ENCODE measurements at regions of chr3 and their contacts with region 1.

Region 1: GRCh38 chr3:179929091-179929529 is 107.6 kb downstream of the PEX5L start:
- DNase-seq: peak; percentile 54
- H3K4me3 Mint-ChIP-seq: no peak overlapping the region
- H3K27ac Mint-ChIP-seq: no peak overlapping the region
- H3K4me1 Mint-ChIP-seq: peaks cover 1% of the 10 kb centered on the region
- H3K27me3 Mint-ChIP-seq: peaks cover 7% of the 10 kb centered on the region

Region 2: DNA sequence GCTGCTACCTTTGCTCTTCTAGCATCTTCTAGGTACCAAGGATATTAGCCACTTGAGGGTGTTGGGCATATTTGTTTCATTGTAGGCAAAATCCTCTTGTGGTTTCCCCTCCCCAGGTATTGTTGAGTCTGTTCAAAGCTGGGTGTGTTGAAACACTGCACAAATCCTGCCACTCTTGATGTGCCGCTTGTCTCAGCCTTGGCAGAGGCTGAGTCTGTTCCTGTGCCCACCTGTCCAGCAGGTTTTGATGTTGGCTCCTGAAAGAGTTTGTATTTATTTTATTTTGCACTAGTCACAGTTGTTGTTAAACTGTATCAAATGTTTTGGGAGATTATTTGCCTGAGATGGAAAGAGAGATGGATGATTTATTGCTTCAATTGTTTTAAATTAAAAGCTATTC is 140.1 kb before region 1 on chr3:
- CTCF ChIA-PET with region 1: no interaction called
- POLR2A ChIA-PET with region 1: no interaction called
- intact Hi-C with region 1: no loop called
- DNase-seq: no peak
- H3K4me3 Mint-ChIP-seq: no peak overlapping the region
- H3K27ac Mint-ChIP-seq: no peak overlapping the region
- H3K4me1 Mint-ChIP-seq: no peaks in the 10 kb centered on the region
- H3K27me3 Mint-ChIP-seq: no peaks in the 10 kb centered on the region

Region 3: DNA sequence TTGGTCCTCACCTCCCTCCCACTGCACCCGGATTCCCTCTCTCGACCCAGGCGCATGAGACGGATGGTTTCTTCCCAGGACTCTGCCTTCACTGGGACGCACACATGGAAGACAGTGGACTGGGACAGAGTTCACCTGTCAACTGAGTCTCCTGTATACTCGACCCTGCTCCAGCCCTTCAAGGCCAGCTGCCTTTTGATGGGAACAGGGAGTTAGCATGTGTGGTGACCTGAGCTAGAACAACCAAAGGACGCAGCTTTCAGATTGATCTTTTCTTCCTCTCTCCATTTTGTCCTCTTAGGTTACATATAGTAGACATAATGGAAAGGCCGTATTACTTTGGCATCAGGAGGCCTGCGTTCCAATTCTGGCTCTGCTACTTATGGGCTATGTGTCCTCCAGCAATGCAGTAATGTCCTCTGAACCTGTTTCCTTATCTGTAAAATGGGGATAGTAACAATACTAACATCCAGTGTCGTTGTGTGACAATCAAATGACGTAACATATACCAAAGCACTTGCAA is 13.5 kb after region 1 on chr3:
- CTCF ChIA-PET with region 1: interaction called, 11 read pairs
- POLR2A ChIA-PET with region 1: no interaction called
- intact Hi-C with region 1: no loop called
- DNase-seq: no peak
- H3K4me3 Mint-ChIP-seq: no peak overlapping the region
- H3K27ac Mint-ChIP-seq: no peak overlapping the region
- H3K4me1 Mint-ChIP-seq: no peaks in the 10 kb centered on the region
- H3K27me3 Mint-ChIP-seq: peaks cover 10% of the 10 kb centered on the region

Region 4: GRCh38 chr3:180180795-180181194 is 251.7 kb after region 1 on chr3:
- CTCF ChIA-PET with region 1: no interaction called
- POLR2A ChIA-PET with region 1: no interaction called
- intact Hi-C with region 1: no loop called
- DNase-seq: no peak
- H3K4me3 Mint-ChIP-seq: no peak overlapping the region
- H3K27ac Mint-ChIP-seq: no peak overlapping the region
- H3K4me1 Mint-ChIP-seq: no peaks in the 10 kb centered on the region
- H3K27me3 Mint-ChIP-seq: no peaks in the 10 kb centered on the region

Region 5: DNA sequence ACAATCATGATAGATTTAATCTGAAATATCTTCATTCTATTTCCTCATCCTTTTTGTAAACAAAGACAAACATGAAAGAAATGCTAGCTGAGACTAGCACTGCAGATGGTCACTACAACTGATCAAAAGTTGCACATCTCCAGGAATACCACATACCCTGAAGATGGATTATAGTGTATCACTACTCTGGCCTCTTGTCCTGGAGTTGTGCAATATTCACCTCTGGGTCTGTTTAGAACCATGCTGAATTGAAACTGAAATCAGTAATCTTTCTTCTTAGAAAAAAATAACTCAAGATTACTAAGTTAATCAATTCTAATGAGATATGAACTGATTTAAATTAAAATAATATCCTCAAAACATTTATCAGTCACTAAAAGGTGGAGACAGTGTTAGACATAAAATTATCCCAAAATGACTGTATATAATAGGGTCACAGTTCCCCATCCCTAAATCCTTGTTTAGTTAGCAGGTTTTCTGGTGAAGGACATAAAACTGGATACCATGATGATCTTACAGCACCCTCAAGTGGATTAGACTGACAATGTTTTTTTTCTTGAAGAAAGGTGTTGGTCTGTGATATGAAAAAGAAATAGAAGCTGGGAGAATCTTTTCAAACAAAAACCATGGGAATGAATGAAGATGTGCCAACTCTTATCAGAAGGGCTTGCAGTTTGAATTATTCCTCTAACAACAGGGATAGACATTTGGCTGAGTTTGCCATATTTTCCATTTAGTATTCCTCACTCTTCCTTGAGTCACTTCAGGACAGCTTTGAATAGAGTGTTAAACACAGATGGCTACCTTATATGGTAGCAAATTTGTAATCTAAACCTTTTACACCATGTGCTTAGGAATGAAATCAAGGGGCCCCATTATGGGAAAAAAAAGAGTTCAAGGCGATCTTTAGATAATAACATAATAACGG is 665.8 kb after region 1 on chr3:
- CTCF ChIA-PET with region 1: interaction called, 9 read pairs
- POLR2A ChIA-PET with region 1: no interaction called
- intact Hi-C with region 1: loop called (anchors 1 kb)
- DNase-seq: no peak
- H3K4me3 Mint-ChIP-seq: no peak overlapping the region
- H3K27ac Mint-ChIP-seq: no peak overlapping the region
- H3K4me1 Mint-ChIP-seq: no peaks in the 10 kb centered on the region
- H3K27me3 Mint-ChIP-seq: peaks cover 25% of the 10 kb centered on the region

Measured in activated CD4-positive, alpha-beta memory T cell treated with anti-CD3 and anti-CD28 coated beads for 36 hours (primary cell).